Activated T-helper 1 cell treated with anti-CD3 and anti-CD28 coated beads, Interleukin-12 subunit alpha, Interleukin-12 subunit beta, Interleukin-2, Interleukin-4 antibody, amounts not matched to agents 30 ng/mL and 10 ng/mL and 1 ng/mL, durations not matched to agents 14 hours and 24 hours and 36 hours (primary cell): ENCODE measurements at regions of chr22 and their contacts with region 1.

Region 1: DNA sequence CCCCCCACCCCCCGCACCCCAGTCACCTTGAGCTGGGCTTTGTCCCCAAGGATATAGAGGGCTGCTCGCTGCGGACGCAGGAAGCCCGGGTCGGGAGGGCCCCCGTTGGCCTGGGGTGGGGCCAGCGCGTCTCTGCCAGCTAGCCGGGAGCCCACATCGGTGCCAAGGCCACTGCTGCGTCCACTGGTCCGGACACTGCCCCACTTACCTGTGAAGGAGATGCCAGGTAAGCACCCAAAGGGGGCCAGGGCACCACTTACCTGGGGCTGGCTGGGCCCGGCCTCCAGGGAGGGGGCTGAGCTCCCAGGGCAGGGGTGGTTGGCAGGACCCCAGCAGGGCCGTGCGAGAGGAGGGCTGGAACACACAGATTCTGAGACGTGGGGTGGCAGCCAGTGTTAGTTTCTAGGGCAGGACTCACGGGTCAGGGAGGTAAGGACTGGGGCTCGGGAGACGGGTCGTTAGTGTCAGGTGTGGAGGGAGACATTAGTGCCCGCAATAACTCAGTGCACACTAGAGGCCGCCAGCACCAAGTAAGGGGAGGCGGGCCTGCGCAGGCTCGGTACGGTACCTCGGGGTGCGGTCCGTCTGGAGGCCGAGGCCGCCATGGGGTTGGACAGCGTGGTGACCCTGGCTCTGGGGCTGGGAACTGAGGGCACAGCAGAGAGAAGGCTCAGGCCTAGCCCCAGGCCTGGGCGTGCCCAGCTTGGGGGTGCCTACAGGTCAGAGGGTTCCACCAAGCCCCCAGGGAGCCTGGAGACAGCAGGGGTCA is 18.2 kb downstream of the SBF1 start:
- DNase-seq: no peak
- H3K4me3 Mint-ChIP-seq: no peak overlapping the region
- H3K27ac Mint-ChIP-seq: no peak overlapping the region
- H3K4me1 Mint-ChIP-seq: peaks cover 8% of the 10 kb centered on the region
- H3K27me3 Mint-ChIP-seq: no peaks in the 10 kb centered on the region

Region 2: GRCh38 chr22:50118557-50119168 is 338.0 kb before region 1 on chr22:
- intact Hi-C with region 1: no loop called
- DNase-seq: no peak
- H3K4me3 Mint-ChIP-seq: no peak overlapping the region
- H3K27ac Mint-ChIP-seq: no peak overlapping the region
- H3K4me1 Mint-ChIP-seq: no peaks in the 10 kb centered on the region
- H3K27me3 Mint-ChIP-seq: peaks cover 17% of the 10 kb centered on the region

Region 3: GRCh38 chr22:50498322-50498890 is 41.8 kb after region 1 on chr22:
- intact Hi-C with region 1: loop called (anchors 2 kb)
- DNase-seq: peak; percentile 61
- H3K4me3 Mint-ChIP-seq: no peak overlapping the region
- H3K27ac Mint-ChIP-seq: no peak overlapping the region
- H3K4me1 Mint-ChIP-seq: peaks cover 10% of the 10 kb centered on the region
- H3K27me3 Mint-ChIP-seq: peaks cover 10% of the 10 kb centered on the region

Region 4: DNA sequence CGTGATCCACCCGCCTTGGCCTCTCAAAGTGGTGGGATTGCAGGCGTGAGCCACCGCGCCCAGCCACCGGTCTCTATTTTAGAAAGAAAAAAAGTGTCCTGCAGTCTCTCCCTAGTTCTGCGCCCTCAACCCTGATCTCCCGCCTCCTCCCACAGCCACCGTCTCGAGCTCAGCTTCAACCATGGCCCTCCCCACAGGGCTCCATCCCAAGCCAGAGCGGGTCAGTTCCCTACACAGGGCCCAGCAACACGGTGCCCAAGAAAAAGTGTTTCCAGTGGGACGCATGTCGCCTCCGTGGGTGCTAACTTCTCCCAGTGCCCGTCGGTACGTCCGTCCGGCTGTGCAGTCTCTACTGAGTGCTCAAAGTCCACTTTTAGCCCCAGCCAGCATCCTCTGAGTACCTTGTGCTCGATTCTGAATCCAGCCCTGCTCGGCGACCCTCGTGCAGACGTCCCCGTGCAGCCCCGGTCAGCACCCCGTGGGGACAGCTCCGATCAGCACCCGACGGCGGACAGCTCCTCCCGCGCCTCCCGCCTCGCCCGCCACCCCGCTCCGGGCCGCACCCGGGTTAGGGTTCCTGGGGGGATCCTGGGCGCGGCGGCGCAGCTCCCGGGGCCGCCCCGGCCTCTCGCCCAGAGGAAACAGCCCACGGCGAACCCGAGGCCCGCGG is 143.3 kb after region 1 on chr22:
- intact Hi-C with region 1: no loop called
- DNase-seq: peak; percentile 57
- H3K4me3 Mint-ChIP-seq: peak overlapping the region; percentile 25
- H3K27ac Mint-ChIP-seq: no peak overlapping the region
- H3K4me1 Mint-ChIP-seq: no peaks in the 10 kb centered on the region
- H3K27me3 Mint-ChIP-seq: peaks cover 36% of the 10 kb centered on the region